H1 (cell line): ENCODE measurements at regions of chr5 and their contacts with region 1.

Region 1: DNA sequence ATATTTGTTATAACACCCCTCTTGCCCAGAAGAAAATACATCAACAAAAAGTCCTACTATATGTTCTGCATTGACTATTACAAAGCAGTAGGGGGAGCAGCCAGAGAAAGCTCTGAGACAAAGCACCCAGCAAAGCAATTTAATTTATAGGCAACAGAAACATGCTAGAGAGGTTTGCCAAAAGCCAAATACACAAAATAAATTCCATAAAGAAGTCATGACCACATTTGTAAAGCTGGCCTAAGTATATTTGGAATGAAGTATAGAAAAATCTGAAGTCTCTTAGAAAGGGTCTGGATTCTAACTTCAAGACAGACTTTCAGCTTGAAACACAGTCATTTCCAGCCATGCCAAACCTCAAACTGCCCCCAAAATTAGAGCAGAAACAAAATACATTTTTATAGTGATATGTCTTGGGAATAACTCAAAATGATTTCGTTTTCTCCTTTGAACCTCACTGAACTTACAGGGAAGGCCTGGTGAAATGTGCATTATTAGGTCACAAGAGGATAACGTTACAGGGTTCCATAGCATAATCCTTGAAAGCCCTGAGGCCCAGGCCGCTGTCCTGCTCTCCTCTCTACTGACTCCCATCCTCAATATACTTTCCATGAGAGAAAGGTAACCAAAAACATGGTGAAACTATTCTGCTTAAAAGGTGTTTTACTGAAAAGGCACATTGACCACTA is 451.8 kb downstream of the RAB3C start:
- DNase-seq: no peak
- H3K4me3 ChIP-seq: no peak overlapping the region
- H3K27ac ChIP-seq: no peak overlapping the region
- H3K4me1 ChIP-seq: no peaks in the 10 kb centered on the region
- H3K27me3 ChIP-seq: peaks cover 0 to 18% (median 15%) of the 10 kb centered on the region in 4 experiments; a peak in 6 of 7 replicates
- CTCF ChIP-seq: peak in 2 of 3 experiments; percentile 43 to 60; a peak in 2 of 4 replicates
- EP300 ChIP-seq: no peak
- POLR2A ChIP-seq: no peak
- RAD21 ChIP-seq: peak; percentile 50

Region 2: GRCh38 chr5:58891971-58892343 is 142.7 kb before region 1 on chr5:
- CTCF ChIA-PET with region 1: interaction called, 19 read pairs
- POLR2A ChIA-PET with region 1: no interaction called
- DNase-seq: no peak
- H3K4me3 ChIP-seq: no peak overlapping the region
- H3K27ac ChIP-seq: no peak overlapping the region
- H3K4me1 ChIP-seq: no peaks in the 10 kb centered on the region; a peak in 1 of 7 replicates
- H3K27me3 ChIP-seq: no peaks in the 10 kb centered on the region
- CTCF ChIP-seq: no peak
- EP300 ChIP-seq: no peak
- POLR2A ChIP-seq: no peak
- RAD21 ChIP-seq: no peak

Region 3: GRCh38 chr5:59007460-59008063 is 27.1 kb before region 1 on chr5:
- CTCF ChIA-PET with region 1: interaction called, 13 read pairs
- POLR2A ChIA-PET with region 1: no interaction called
- DNase-seq: no peak
- H3K4me3 ChIP-seq: no peak overlapping the region
- H3K27ac ChIP-seq: no peak overlapping the region
- H3K4me1 ChIP-seq: peaks cover 2 to 10% (median 8%) of the 10 kb centered on the region in 4 experiments; a peak in 4 of 7 replicates
- H3K27me3 ChIP-seq: no peaks in the 10 kb centered on the region
- CTCF ChIP-seq: peak in 2 of 3 experiments; percentile 30 to 38; a peak in 2 of 4 replicates
- EP300 ChIP-seq: no peak
- POLR2A ChIP-seq: no peak
- RAD21 ChIP-seq: peak in 1 of 2 experiments; percentile 71

Region 4: DNA sequence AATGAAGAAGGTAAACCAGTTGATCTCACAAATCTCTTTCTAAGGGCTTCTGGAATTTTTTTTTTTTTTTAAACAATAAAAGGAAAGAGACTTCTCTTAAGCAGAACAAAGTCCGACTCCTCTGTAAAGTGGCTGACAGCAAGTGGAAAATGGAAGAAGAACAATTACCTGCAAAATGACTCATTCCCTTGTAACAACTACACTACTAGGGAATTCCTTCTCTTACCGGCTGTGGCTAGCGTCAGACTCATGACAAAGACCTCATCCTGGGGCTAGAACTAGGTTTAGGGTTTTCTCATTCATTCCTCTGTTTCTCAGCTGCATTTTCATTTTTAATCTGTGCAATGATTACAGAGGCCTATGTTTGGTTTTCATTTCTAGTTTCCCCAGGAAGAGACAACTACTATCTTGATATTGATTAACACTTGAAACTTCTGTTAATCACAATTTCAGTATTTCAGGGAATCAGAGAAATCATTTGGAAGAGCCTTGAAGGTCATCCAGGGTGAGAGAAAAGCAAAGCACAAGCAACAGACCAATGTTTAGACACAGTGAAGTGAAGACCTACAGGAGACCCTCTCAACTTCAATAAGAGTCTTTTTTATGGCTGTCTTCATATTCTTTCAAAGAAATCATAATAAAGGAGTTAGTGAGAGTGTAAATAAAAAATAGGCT is 13.9 kb before region 1 on chr5:
- CTCF ChIA-PET with region 1: interaction called, 11 read pairs
- POLR2A ChIA-PET with region 1: no interaction called
- DNase-seq: no peak
- H3K4me3 ChIP-seq: no peak overlapping the region
- H3K27ac ChIP-seq: no peak overlapping the region
- H3K4me1 ChIP-seq: peaks cover 0 to 2% (median under 1%) of the 10 kb centered on the region in 4 experiments; a peak in 1 of 7 replicates
- H3K27me3 ChIP-seq: no peaks in the 10 kb centered on the region
- CTCF ChIP-seq: no peak
- EP300 ChIP-seq: no peak
- POLR2A ChIP-seq: no peak
- RAD21 ChIP-seq: no peak

Region 5: GRCh38 chr5:59049068-59049467 is 14.4 kb after region 1 on chr5:
- CTCF ChIA-PET with region 1: interaction called, 13 read pairs
- POLR2A ChIA-PET with region 1: no interaction called
- DNase-seq: no peak
- H3K4me3 ChIP-seq: no peak overlapping the region
- H3K27ac ChIP-seq: no peak overlapping the region
- H3K4me1 ChIP-seq: no peaks in the 10 kb centered on the region
- H3K27me3 ChIP-seq: no peaks in the 10 kb centered on the region
- CTCF ChIP-seq: no peak
- EP300 ChIP-seq: no peak
- POLR2A ChIP-seq: no peak
- RAD21 ChIP-seq: no peak

Region 6: DNA sequence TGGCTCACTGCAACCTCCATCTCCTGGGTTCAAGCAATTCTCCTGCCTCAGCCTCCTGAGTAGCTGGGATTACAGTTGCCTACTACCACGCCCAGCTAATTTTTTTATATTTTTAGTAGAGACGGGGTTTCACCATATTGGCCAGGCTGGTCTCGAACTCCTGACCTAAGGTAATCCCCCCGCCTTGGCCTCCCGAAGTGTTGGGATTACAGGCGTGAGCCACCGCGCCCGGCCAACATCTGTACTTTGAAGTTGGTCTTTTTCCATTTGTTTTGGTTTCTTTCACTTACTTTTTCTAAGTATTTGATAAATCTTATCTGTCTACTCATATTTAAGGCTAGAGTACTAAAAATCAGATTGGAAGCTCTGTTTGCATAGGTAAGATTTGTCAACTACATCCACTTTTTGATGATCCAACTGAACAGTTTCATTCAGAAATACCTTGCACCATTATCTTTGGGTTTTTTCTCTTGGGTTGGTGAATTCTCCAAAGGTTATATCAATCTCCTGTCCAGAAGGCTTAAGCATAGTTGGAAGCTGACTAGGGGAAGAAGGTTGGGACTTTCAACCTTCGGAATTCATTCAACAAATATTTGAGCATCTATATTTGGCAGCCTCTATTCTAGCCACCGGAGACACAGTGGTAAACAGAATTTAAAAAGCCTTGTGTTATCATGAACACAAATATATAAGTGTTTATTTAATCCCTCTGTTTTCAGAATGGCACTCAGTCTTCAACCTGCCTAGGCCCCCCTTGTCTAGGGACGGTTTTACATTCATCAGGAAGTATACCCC is 37.3 kb after region 1 on chr5:
- CTCF ChIA-PET with region 1: no interaction called
- POLR2A ChIA-PET with region 1: no interaction called
- DNase-seq: no peak
- H3K4me3 ChIP-seq: no peak overlapping the region
- H3K27ac ChIP-seq: no peak overlapping the region
- H3K4me1 ChIP-seq: no peaks in the 10 kb centered on the region
- H3K27me3 ChIP-seq: no peaks in the 10 kb centered on the region
- CTCF ChIP-seq: no peak
- EP300 ChIP-seq: no peak
- POLR2A ChIP-seq: no peak
- RAD21 ChIP-seq: no peak

Region 7: GRCh38 chr5:59126708-59127573 is 92.3 kb after region 1 on chr5:
- CTCF ChIA-PET with region 1: interaction called, 17 read pairs
- POLR2A ChIA-PET with region 1: interaction called, 3 read pairs
- DNase-seq: peak in 1 of 2 experiments; percentile 46
- H3K4me3 ChIP-seq: peak overlapping the region in 1 of 4 experiments; percentile 45; a peak in 3 of 8 replicates
- H3K27ac ChIP-seq: peak overlapping the region; percentile 76; the same call in 1 of the 2 replicates
- H3K4me1 ChIP-seq: peaks cover 5 to 23% (median 19%) of the 10 kb centered on the region in 4 experiments
- H3K27me3 ChIP-seq: no peaks in the 10 kb centered on the region
- CTCF ChIP-seq: no peak
- EP300 ChIP-seq: no peak
- POLR2A ChIP-seq: peak in 1 of 2 experiments; percentile 64; a peak in 1 of 3 replicates
- RAD21 ChIP-seq: no peak

Region 8: GRCh38 chr5:59174248-59174844 is 139.7 kb after region 1 on chr5:
- CTCF ChIA-PET with region 1: interaction called, 45 read pairs
- POLR2A ChIA-PET with region 1: interaction called, 4 read pairs
- DNase-seq: no peak
- H3K4me3 ChIP-seq: no peak overlapping the region
- H3K27ac ChIP-seq: no peak overlapping the region
- H3K4me1 ChIP-seq: no peaks in the 10 kb centered on the region
- H3K27me3 ChIP-seq: no peaks in the 10 kb centered on the region
- CTCF ChIP-seq: peak in 2 of 3 experiments; percentile 75 to 76; a peak in 3 of 4 replicates
- EP300 ChIP-seq: no peak
- POLR2A ChIP-seq: no peak
- RAD21 ChIP-seq: peak; percentile 76 to 82